Naive thymus-derived CD4-positive, alpha-beta T cell (primary cell): ENCODE measurements at regions of chr16 and their contacts with region 1.

Region 1: GRCh38 chr16:4693296-4693955 is at the start of gene NUDT16L1:
- DNase-seq: peak; percentile 95 to 99 (median 98)
- ATAC-seq: peak; percentile 97
- H3K4me3 ChIP-seq: peak within 1 kb of the TSS; percentile 93
- H3K4me3 Mint-ChIP-seq: peak within 1 kb of the TSS; percentile 78 to 91 (median 86)
- H3K27ac ChIP-seq: peak within 1 kb of the TSS; percentile 93
- H3K27ac Mint-ChIP-seq: peak within 1 kb of the TSS; percentile 73 to 93 (median 88)
- H3K4me1 ChIP-seq: peaks cover 14% of the 10 kb centered on the region in 2 donors
- H3K4me1 Mint-ChIP-seq: peaks cover 8 to 23% (median 14%) of the 10 kb centered on the region in 7 donors
- H3K27me3 ChIP-seq: no peaks in the 10 kb centered on the region
- H3K27me3 Mint-ChIP-seq: no peaks in the 10 kb centered on the region
- total RNA-seq, gene NUDT16L1: 42.8 to 65.4 (median 53.3) TPM

Region 2: GRCh38 chr16:4350787-4351659 is 342.4 kb before region 1 on chr16 and contains the start of gene PAM16:
- CTCF ChIA-PET with region 1: interaction called, 5 read pairs
- POLR2A ChIA-PET with region 1: no interaction called
- intact Hi-C with region 1: loop called in 1 of 2 experiments (anchors 10 kb)
- DNase-seq: peak; percentile 95 to 99 (median 98)
- ATAC-seq: peak; percentile 93
- H3K4me3 ChIP-seq: peak within 1 kb of the TSS; percentile 91
- H3K4me3 Mint-ChIP-seq: peak within 1 kb of the TSS; percentile 90 to 98 (median 94)
- H3K27ac ChIP-seq: peak within 1 kb of the TSS; percentile 87
- H3K27ac Mint-ChIP-seq: peak within 1 kb of the TSS; percentile 76 to 95 (median 92)
- H3K4me1 ChIP-seq: peaks cover 5 to 7% of the 10 kb centered on the region in 2 donors
- H3K4me1 Mint-ChIP-seq: peaks cover 11 to 38% (median 32%) of the 10 kb centered on the region in 7 donors
- H3K27me3 ChIP-seq: no peaks in the 10 kb centered on the region
- H3K27me3 Mint-ChIP-seq: no peaks in the 10 kb centered on the region
- total RNA-seq, gene PAM16: 34.1 to 46.2 (median 45.0) TPM

Region 3: DNA sequence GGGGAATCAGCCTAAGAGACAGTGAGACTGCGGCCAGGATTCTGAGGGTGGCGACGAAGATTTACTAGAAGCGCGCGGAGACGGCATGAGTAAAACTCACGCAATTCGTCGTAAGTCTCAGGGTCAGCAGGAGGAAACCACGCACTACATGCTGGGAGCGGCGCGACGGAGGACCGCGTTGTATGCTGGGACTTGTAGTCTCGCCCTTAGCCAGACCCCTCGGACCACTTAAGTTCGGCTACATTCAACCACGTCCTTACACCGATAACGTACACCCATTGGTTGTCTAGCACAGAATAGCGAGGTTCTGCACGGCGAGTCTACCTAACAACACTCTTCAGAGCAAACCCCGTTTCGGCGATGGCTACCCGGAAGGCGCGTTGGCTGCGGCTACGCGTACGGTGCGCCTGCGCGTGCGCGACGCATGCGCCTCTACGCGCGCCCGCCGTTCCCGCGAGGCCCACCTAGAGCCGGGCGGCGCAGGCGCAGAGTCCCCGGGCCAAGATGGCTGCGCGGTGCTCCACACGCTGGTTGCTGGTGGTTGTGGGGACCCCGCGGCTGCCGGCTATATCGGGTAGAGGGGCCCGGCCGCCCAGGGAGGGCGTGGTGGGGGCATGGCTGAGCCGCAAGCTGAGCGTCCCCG is 267.9 kb before region 1 on chr16 and contains the start of gene DNAJA3:
- CTCF ChIA-PET with region 1: no interaction called
- POLR2A ChIA-PET with region 1: no interaction called
- intact Hi-C with region 1: loop called in 1 of 2 experiments (anchors 1 kb)
- DNase-seq: peak; percentile 91 to 97 (median 95)
- ATAC-seq: peak; percentile 93
- H3K4me3 ChIP-seq: peak within 1 kb of the TSS; percentile 97
- H3K4me3 Mint-ChIP-seq: peak within 1 kb of the TSS; percentile 92 to 99 (median 98)
- H3K27ac ChIP-seq: peak within 1 kb of the TSS; percentile 95
- H3K27ac Mint-ChIP-seq: peak within 1 kb of the TSS; percentile 99 to 100 (median 100)
- H3K4me1 ChIP-seq: peaks cover 18% of the 10 kb centered on the region in 2 donors
- H3K4me1 Mint-ChIP-seq: peaks cover 26 to 37% (median 31%) of the 10 kb centered on the region in 7 donors
- H3K27me3 ChIP-seq: no peaks in the 10 kb centered on the region
- H3K27me3 Mint-ChIP-seq: peaks cover 0 to 4% (median 0%) of the 10 kb centered on the region in 5 donors
- total RNA-seq, gene DNAJA3: 33.6 to 79.8 (median 70.5) TPM

Region 4: DNA sequence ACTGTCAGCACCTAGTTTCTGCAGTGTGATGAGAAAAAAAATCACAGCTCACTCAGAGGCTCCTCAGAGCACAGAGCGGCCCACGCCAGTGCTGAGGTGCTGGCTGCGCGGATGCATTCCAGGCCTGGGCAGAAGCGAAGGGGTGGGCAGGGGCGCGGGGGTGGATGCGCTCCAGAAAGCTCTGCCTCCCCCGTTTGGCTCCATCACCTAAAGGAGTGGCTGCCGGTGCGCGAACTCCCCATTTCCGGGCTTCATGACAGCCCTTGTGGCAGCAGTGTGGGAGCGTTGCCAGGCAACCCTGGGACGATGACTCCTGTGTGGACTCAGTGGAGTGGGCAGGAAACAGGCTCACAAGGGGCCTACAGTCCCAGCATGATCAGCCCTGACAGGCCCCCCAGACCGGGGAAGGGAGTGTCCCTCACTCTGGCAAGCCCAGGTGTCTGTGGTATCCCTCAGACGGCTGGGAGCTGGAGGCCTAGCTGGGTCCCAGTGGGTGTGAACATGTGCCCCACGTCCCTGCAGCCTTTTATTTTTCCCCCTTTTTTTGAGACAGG is 32.9 kb before region 1 on chr16:
- CTCF ChIA-PET with region 1: interaction called, 7 read pairs
- POLR2A ChIA-PET with region 1: interaction called, 9 read pairs
- intact Hi-C with region 1: loop called (anchors 1 to 2 kb)
- DNase-seq: peak in 8 of 9 donors; percentile 49 to 81 (median 73)
- ATAC-seq: peak; percentile 60
- H3K4me3 ChIP-seq: no peak overlapping the region
- H3K4me3 Mint-ChIP-seq: peak overlapping the region in 9 of 10 donors; percentile 48 to 78 (median 62)
- H3K27ac ChIP-seq: peak overlapping the region; percentile 74
- H3K27ac Mint-ChIP-seq: peak overlapping the region; percentile 88 to 96 (median 92)
- H3K4me1 ChIP-seq: peaks cover 34 to 65% of the 10 kb centered on the region in 2 donors
- H3K4me1 Mint-ChIP-seq: peaks cover 38 to 72% (median 64%) of the 10 kb centered on the region in 7 donors
- H3K27me3 ChIP-seq: no peaks in the 10 kb centered on the region
- H3K27me3 Mint-ChIP-seq: no peaks in the 10 kb centered on the region

Region 5: GRCh38 chr16:4734063-4734729 is 40.8 kb after region 1 on chr16 and contains the starts of genes ANKS3 and DNAAF8:
- CTCF ChIA-PET with region 1: no interaction called
- POLR2A ChIA-PET with region 1: interaction called, 16 read pairs
- intact Hi-C with region 1: loop called (anchors 1 kb)
- DNase-seq: peak; percentile 72 to 90 (median 79)
- ATAC-seq: peak; percentile 86
- H3K4me3 ChIP-seq: peak within 1 kb of the TSS; percentile 98
- H3K4me3 Mint-ChIP-seq: peak within 1 kb of the TSS; percentile 84 to 96 (median 92)
- H3K27ac ChIP-seq: peak within 1 kb of the TSS; percentile 79
- H3K27ac Mint-ChIP-seq: peak within 1 kb of the TSS; percentile 73 to 92 (median 90)
- H3K4me1 ChIP-seq: peaks cover 6 to 9% of the 10 kb centered on the region in 2 donors
- H3K4me1 Mint-ChIP-seq: peaks cover 9 to 32% (median 20%) of the 10 kb centered on the region in 7 donors
- H3K27me3 ChIP-seq: no peaks in the 10 kb centered on the region
- H3K27me3 Mint-ChIP-seq: peaks cover 0 to 3% (median 0%) of the 10 kb centered on the region in 5 donors
- total RNA-seq, gene ANKS3: 17.6 to 32.7 (median 25.3) TPM
- total RNA-seq, gene DNAAF8: 0.11 to 0.57 (median 0.27) TPM

Region 6: DNA sequence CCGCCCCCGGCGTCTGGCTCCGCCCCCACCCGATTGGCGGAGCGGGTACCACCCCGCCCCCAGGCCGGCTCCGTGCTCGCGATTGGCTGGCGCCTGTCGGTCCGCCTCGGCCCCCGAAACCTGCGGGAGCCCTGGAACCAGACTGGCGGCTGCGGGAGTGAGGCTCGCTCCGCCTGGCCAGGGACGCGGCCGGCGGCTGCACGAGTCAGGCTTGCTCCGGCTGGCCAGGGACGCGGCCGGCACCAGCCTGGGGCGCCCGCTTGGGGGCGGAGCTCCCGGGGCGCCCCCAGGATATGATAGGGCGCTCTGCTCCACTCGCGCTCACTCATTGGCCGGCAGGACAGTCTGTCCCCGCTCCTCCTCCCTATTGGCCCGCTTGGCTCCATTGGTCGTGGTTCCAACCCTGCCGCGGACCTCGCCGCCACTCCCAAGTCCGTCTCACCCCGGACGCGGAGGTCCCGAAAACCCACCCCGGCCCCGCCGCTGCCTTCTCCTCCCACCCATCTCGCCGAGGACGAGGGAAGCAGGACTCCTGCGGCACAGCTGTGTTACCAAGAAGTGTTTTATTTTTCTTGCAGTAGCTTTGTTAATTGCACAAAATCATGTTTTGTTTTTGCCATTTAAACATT is 109.3 kb after region 1 on chr16:
- CTCF ChIA-PET with region 1: no interaction called
- POLR2A ChIA-PET with region 1: interaction called, 5 read pairs
- intact Hi-C with region 1: loop called (anchors 1 kb)
- DNase-seq: peak; percentile 82 to 97 (median 93)
- ATAC-seq: peak; percentile 93
- H3K4me3 ChIP-seq: peak overlapping the region; percentile 79
- H3K4me3 Mint-ChIP-seq: peak overlapping the region; percentile 81 to 86 (median 86)
- H3K27ac ChIP-seq: peak overlapping the region; percentile 60
- H3K27ac Mint-ChIP-seq: peak overlapping the region in 8 of 9 donors; percentile 36 to 84 (median 74)
- H3K4me1 ChIP-seq: peaks cover 10 to 18% of the 10 kb centered on the region in 2 donors
- H3K4me1 Mint-ChIP-seq: peaks cover 7 to 19% (median 12%) of the 10 kb centered on the region in 7 donors
- H3K27me3 ChIP-seq: no peaks in the 10 kb centered on the region
- H3K27me3 Mint-ChIP-seq: no peaks in the 10 kb centered on the region

Region 7: GRCh38 chr16:4924593-4925378 is 231.4 kb after region 1 on chr16:
- CTCF ChIA-PET with region 1: no interaction called
- POLR2A ChIA-PET with region 1: no interaction called
- intact Hi-C with region 1: no loop called
- DNase-seq: no peak
- ATAC-seq: no peak
- H3K4me3 ChIP-seq: no peak overlapping the region
- H3K4me3 Mint-ChIP-seq: no peak overlapping the region
- H3K27ac ChIP-seq: no peak overlapping the region
- H3K27ac Mint-ChIP-seq: no peak overlapping the region
- H3K4me1 ChIP-seq: no peaks in the 10 kb centered on the region
- H3K4me1 Mint-ChIP-seq: peaks cover 0 to 4% (median 0%) of the 10 kb centered on the region in 7 donors
- H3K27me3 ChIP-seq: no peaks in the 10 kb centered on the region
- H3K27me3 Mint-ChIP-seq: peaks cover 0 to 4% (median 0%) of the 10 kb centered on the region in 5 donors